ENCODE measurements at regions of chr19 and their contacts with region 1.

Region 1: GRCh38 chr19:40750059-40750873 is at the start of gene ACTMAP:
- DNase-seq: peak; percentile 100
- H3K4me3 ChIP-seq: peak within 1 kb of the TSS; percentile 73
- H3K4me3 Mint-ChIP-seq: peak within 1 kb of the TSS; percentile 93
- H3K27ac Mint-ChIP-seq: peak within 1 kb of the TSS; percentile 98
- H3K4me1 ChIP-seq: peaks cover 28% of the 10 kb centered on the region
- H3K4me1 Mint-ChIP-seq: peaks cover 27% of the 10 kb centered on the region
- H3K27me3 ChIP-seq: no peaks in the 10 kb centered on the region
- H3K27me3 Mint-ChIP-seq: no peaks in the 10 kb centered on the region
- CTCF ChIP-seq: no peak
- total RNA-seq, gene ACTMAP: 28.0 and 29.2 TPM in 2 replicates

Region 2: GRCh38 chr19:40662921-40663694 is 87.2 kb before region 1 on chr19:
- CTCF ChIA-PET with region 1: interaction called, 5 read pairs
- POLR2A ChIA-PET with region 1: interaction called, 14 read pairs
- intact Hi-C with region 1: loop called (anchors 10 kb)
- DNase-seq: peak; percentile 88 to 95
- H3K4me3 ChIP-seq: peak overlapping the region; percentile 86
- H3K4me3 Mint-ChIP-seq: peak overlapping the region; percentile 82
- H3K27ac Mint-ChIP-seq: peak overlapping the region; percentile 68
- H3K4me1 ChIP-seq: no peaks in the 10 kb centered on the region
- H3K4me1 Mint-ChIP-seq: no peaks in the 10 kb centered on the region
- H3K27me3 ChIP-seq: no peaks in the 10 kb centered on the region
- H3K27me3 Mint-ChIP-seq: no peaks in the 10 kb centered on the region
- CTCF ChIP-seq: peak; percentile 94 to 98

Region 3: GRCh38 chr19:40690693-40691420 is 59.4 kb before region 1 on chr19:
- CTCF ChIA-PET with region 1: no interaction called
- POLR2A ChIA-PET with region 1: interaction called, 20 read pairs
- intact Hi-C with region 1: loop called (anchors 2 kb)
- DNase-seq: peak; percentile 94 to 95
- H3K4me3 ChIP-seq: peak overlapping the region; percentile 58
- H3K4me3 Mint-ChIP-seq: no peak overlapping the region
- H3K27ac Mint-ChIP-seq: peak overlapping the region; percentile 100
- H3K4me1 ChIP-seq: peaks cover 24% of the 10 kb centered on the region
- H3K4me1 Mint-ChIP-seq: peaks cover 5% of the 10 kb centered on the region
- H3K27me3 ChIP-seq: no peaks in the 10 kb centered on the region
- H3K27me3 Mint-ChIP-seq: no peaks in the 10 kb centered on the region
- CTCF ChIP-seq: no peak

Region 4: DNA sequence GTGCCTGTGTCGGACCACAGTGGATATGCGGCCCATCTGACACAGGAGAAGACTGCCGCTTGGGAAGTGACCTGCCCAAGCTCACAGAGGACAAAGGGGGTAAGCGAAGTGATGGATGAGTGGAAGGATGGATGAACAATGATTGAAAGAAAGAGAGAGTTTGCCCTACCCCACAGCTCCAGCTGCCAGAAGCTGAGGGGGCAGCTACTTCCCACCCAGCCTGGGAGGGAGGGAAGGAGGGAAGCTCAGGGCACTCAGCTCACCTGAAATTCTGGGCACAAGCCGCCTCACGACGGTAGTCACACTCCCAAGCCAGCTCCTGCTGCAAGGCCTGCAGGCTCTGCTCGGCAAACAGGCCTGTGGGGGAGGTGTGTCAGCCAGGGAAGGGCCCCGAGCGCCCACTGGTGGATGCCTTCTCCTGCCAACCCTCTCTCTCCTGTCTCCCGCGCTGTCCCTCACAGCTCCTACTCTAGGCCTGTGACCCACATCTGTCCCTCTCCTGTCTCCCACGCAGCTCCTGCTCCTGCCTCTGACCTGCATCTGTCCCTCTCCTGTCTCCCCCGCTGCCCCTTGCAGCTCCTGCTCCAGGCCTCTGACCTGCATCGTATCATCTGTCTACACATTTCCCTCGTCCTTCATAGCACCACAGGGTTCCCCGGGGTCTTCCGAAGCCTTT is 47.8 kb before region 1 on chr19:
- CTCF ChIA-PET with region 1: no interaction called
- POLR2A ChIA-PET with region 1: no interaction called
- intact Hi-C with region 1: no loop called
- DNase-seq: peak in 1 of 2 experiments; percentile 45
- H3K4me3 ChIP-seq: no peak overlapping the region
- H3K4me3 Mint-ChIP-seq: no peak overlapping the region
- H3K27ac Mint-ChIP-seq: no peak overlapping the region
- H3K4me1 ChIP-seq: no peaks in the 10 kb centered on the region
- H3K4me1 Mint-ChIP-seq: no peaks in the 10 kb centered on the region
- H3K27me3 ChIP-seq: no peaks in the 10 kb centered on the region
- H3K27me3 Mint-ChIP-seq: no peaks in the 10 kb centered on the region
- CTCF ChIP-seq: peak; percentile 26 to 54

Region 5: DNA sequence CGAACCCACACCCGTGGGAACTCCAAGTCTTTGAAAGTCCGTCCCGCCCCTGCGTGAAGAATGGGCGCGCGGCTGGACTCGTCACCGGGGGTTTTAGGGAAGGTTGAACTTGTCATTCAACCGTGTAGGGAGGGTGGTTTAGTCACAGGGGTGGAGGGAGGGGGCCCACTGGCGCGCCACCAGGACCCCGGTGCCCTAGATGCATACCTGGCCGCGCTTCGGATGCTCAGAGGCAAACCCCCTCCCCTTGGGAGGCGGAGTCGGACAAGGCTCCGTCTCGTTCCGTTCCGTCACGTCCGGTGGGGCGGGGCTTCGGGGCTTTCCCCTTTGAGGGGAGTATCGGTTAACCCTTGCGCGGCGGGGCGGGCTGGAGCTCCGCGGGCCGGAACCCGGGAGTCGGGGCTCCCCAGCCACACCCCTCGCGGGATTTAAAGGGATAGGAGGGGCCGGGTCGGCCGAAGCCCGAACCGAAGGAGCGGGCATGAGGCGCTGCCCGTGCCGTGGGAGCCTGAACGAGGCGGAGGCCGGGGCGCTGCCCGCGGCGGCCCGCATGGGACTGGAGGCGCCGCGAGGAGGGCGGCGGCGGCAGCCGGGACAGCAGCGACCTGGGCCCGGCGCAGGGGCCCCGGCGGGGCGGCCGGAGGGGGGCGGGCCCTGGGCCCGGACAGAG is 33.5 kb before region 1 on chr19 and contains the starts of genes COQ8B and ITPKC:
- CTCF ChIA-PET with region 1: no interaction called
- POLR2A ChIA-PET with region 1: interaction called, 33 read pairs
- intact Hi-C with region 1: loop called (anchors 1 kb)
- DNase-seq: peak; percentile 100
- H3K4me3 ChIP-seq: peak within 1 kb of the TSS; percentile 71
- H3K4me3 Mint-ChIP-seq: peak within 1 kb of the TSS; percentile 84
- H3K27ac Mint-ChIP-seq: peak within 1 kb of the TSS; percentile 93
- H3K4me1 ChIP-seq: peaks cover 6% of the 10 kb centered on the region; the same call in 1 of the 2 replicates
- H3K4me1 Mint-ChIP-seq: peaks cover 18% of the 10 kb centered on the region
- H3K27me3 ChIP-seq: no peaks in the 10 kb centered on the region
- H3K27me3 Mint-ChIP-seq: no peaks in the 10 kb centered on the region
- CTCF ChIP-seq: no peak
- total RNA-seq, gene COQ8B: 30.9 and 35.7 TPM in 2 replicates
- total RNA-seq, gene ITPKC: 28.5 and 31.2 TPM in 2 replicates

Region 6: DNA sequence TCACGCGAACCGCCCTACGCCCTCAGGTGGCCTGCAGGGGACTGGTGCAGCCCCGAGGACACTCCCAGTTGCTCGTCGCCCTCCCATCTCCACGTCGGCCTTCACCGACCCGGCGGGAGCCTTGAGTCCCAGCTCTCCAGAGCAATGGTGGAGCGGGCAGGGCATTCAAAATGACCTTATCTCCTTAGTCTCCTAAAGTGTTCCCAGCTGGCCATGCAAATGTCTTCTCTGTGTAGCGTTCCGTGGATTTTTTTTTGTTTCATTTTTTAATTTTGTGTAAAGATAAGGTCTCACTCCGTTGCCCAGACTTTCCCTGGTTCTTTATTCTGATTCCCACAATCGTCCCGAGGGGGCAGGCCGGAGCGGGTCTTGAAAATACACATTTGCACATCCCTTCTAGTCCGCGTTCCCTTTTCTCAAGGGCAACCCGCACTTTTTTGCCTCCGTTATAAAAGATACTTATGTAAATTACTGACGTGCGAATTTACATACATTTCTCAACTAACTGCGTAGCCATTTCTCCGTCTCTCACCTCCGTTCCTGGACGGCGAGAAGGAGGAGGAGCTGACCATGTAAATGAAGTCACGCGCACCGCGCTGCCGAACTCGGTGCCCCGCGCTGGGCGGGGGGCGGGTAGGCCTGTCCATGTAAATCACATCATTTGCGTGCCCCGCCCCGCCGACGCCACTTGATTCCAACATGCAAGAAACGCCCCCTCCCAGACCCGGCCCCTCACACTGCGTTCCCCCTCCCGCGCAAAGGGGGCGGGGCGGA is 48.1 kb after region 1 on chr19:
- CTCF ChIA-PET with region 1: interaction called, 4 read pairs
- POLR2A ChIA-PET with region 1: interaction called, 28 read pairs
- intact Hi-C with region 1: loop called (anchors 1 kb)
- DNase-seq: peak; percentile 100
- H3K4me3 ChIP-seq: peak overlapping the region; percentile 50
- H3K4me3 Mint-ChIP-seq: peak overlapping the region; percentile 100
- H3K27ac Mint-ChIP-seq: peak overlapping the region; percentile 96
- H3K4me1 ChIP-seq: peaks cover 15% of the 10 kb centered on the region
- H3K4me1 Mint-ChIP-seq: peaks cover 10% of the 10 kb centered on the region
- H3K27me3 ChIP-seq: no peaks in the 10 kb centered on the region
- H3K27me3 Mint-ChIP-seq: no peaks in the 10 kb centered on the region
- CTCF ChIP-seq: peak; percentile 57 to 63

Region 7: DNA sequence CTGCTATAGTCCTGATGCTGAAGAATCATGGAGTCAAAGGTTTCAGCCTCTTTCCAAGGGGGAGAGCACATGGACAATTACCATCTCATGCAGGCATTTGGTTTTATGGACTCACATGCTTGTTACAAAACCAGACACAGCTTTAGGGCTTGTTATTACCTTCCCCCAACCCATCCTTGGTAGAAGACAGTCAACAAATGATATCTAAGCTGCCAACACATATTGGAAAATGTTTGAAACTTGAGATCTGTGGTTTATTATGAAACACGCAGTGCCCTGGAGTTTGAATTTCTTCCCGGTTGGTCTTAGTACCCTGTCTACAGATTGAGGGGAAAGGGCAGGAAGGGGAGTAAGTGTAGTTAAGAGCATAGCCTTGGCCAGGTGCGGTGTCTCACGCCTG is 112.5 kb after region 1 on chr19:
- CTCF ChIA-PET with region 1: no interaction called
- POLR2A ChIA-PET with region 1: no interaction called
- intact Hi-C with region 1: no loop called
- DNase-seq: no peak
- H3K4me3 ChIP-seq: no peak overlapping the region
- H3K4me3 Mint-ChIP-seq: no peak overlapping the region
- H3K27ac Mint-ChIP-seq: no peak overlapping the region
- H3K4me1 ChIP-seq: peaks cover 15% of the 10 kb centered on the region
- H3K4me1 Mint-ChIP-seq: peaks cover 7% of the 10 kb centered on the region
- H3K27me3 ChIP-seq: no peaks in the 10 kb centered on the region
- H3K27me3 Mint-ChIP-seq: no peaks in the 10 kb centered on the region
- CTCF ChIP-seq: no peak